HCT116 (cell line): ENCODE measurements at regions of chr16 and their contacts with region 1.

Region 1: DNA sequence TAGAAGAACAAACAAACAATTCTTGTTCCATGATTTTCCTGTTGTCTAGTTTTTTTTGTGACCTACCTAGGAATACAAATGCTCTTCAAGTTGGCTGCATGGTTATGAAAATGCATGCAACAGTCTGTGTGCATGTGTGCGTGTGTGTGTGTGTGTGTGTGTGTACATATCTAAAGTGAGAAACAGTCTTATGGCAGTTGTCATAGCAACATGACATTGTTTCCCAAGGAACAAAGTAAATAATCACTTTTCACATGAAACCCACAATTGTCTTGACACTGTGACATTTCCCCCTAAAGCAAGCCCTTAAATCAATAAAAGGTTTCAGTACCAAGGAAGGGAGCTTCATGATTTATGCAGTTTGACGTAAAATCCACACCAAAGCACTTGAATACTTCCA is 758.4 kb downstream of the CDH8 start:
- DNase-seq: no peak
- ATAC-seq: no peak
- H3K4me3 ChIP-seq: no peak overlapping the region
- H3K27ac ChIP-seq: no peak overlapping the region
- H3K4me1 ChIP-seq: no peaks in the 10 kb centered on the region
- H3K27me3 ChIP-seq: no peaks in the 10 kb centered on the region
- CTCF ChIP-seq: no peak
- POLR2A ChIP-seq: no peak
- RAD21 ChIP-seq: no peak

Region 2: DNA sequence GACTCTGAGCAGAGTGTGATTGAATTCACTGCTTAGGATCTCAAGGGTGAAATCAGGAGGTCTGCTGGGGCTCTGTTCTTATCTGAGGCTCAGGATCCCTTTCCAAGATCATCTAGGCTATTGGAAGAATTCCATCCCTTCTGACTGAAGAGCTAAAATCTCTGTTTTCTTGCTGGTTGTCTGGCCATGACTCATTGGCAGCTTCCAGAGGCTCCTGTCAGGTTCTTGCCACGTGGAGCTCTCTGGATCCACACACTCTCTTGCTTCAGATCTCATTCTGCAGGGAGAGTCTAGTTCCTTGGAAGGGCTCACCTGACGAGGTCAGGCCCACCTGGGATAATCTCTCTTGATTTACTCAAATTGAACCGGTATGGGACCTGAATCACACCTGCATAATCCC is 172.3 kb before region 1 on chr16:
- CTCF ChIA-PET with region 1: no interaction called
- POLR2A ChIA-PET with region 1: no interaction called
- RAD21 ChIA-PET with region 1: no interaction called
- intact Hi-C with region 1: no loop called
- DNase-seq: no peak
- ATAC-seq: no peak
- H3K4me3 ChIP-seq: no peak overlapping the region
- H3K27ac ChIP-seq: no peak overlapping the region
- H3K4me1 ChIP-seq: no peaks in the 10 kb centered on the region
- H3K27me3 ChIP-seq: no peaks in the 10 kb centered on the region
- CTCF ChIP-seq: no peak
- POLR2A ChIP-seq: no peak
- RAD21 ChIP-seq: no peak

Region 3: GRCh38 chr16:61332461-61332860 is 54.6 kb after region 1 on chr16:
- CTCF ChIA-PET with region 1: no interaction called
- POLR2A ChIA-PET with region 1: no interaction called
- RAD21 ChIA-PET with region 1: no interaction called
- intact Hi-C with region 1: loop called (anchors 10 kb)
- DNase-seq: no peak
- ATAC-seq: no peak
- H3K4me3 ChIP-seq: no peak overlapping the region
- H3K27ac ChIP-seq: no peak overlapping the region
- H3K4me1 ChIP-seq: no peaks in the 10 kb centered on the region
- H3K27me3 ChIP-seq: no peaks in the 10 kb centered on the region
- CTCF ChIP-seq: no peak
- POLR2A ChIP-seq: no peak
- RAD21 ChIP-seq: no peak

Region 4: GRCh38 chr16:61385392-61386071 is 107.7 kb after region 1 on chr16:
- CTCF ChIA-PET with region 1: no interaction called
- POLR2A ChIA-PET with region 1: no interaction called
- RAD21 ChIA-PET with region 1: no interaction called
- intact Hi-C with region 1: no loop called
- DNase-seq: no peak
- ATAC-seq: no peak
- H3K4me3 ChIP-seq: no peak overlapping the region
- H3K27ac ChIP-seq: no peak overlapping the region
- H3K4me1 ChIP-seq: no peaks in the 10 kb centered on the region
- H3K27me3 ChIP-seq: no peaks in the 10 kb centered on the region
- CTCF ChIP-seq: no peak
- POLR2A ChIP-seq: no peak
- RAD21 ChIP-seq: no peak